PC-9 (cell line): ENCODE measurements at regions of chr7 and their contacts with region 1.

Region 1: DNA sequence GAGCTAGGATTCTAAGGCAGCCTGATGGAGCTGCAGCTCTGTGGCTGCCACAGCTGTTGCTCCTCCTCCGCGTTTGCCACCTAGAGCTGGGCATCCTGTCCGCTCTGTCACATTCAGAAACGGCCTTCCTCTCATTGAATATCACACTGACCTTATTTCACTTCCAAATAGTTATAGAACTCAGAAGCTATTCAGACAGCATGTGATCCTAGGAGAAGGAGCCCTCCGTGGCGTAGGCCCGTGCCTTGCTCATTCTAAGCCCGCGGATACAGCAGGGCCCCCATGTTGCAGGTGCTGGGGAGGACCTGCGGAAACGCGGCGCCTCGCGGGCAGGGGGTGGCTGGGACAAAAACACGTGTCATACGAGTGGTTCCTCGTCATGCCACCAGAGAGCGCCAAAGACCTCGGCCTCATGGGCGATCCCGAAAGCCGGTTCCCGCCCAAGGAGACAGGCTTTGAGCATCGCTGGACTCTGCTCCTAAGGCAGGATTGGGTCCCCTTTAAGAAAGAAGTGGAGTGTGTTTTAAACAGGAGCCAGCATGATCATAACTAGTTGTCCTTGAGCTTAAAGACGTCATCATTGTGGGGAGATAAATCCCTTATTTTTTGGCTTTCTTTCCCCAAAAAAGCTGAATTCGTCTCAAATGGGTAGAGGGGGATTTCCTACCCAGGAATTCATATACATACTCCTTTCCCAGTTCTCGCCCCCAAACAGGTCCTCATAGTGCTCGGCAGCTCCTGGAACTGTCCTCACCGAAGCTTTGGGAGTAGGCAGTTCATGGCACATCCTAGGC is 17.9 kb upstream of the FIGNL1 start:
- DNase-seq: peak; percentile 55 to 86
- H3K4me3 ChIP-seq: peak overlapping the region; percentile 38; the same call in 1 of the 2 replicates
- H3K27ac ChIP-seq: no peak overlapping the region
- H3K4me1 ChIP-seq: peaks cover 4% of the 10 kb centered on the region
- H3K27me3 ChIP-seq: no peaks in the 10 kb centered on the region
- CTCF ChIP-seq: peak; percentile 99

Region 2: GRCh38 chr7:50418086-50418515 is 49.9 kb before region 1 on chr7:
- CTCF ChIA-PET with region 1: no interaction called
- POLR2A ChIA-PET with region 1: no interaction called
- intact Hi-C with region 1: no loop called
- DNase-seq: peak; percentile 63 to 71
- H3K4me3 ChIP-seq: no peak overlapping the region
- H3K27ac ChIP-seq: no peak overlapping the region
- H3K4me1 ChIP-seq: no peaks in the 10 kb centered on the region
- H3K27me3 ChIP-seq: peaks cover 17% of the 10 kb centered on the region; the same call in 1 of the 2 replicates
- CTCF ChIP-seq: peak; percentile 94

Region 3: DNA sequence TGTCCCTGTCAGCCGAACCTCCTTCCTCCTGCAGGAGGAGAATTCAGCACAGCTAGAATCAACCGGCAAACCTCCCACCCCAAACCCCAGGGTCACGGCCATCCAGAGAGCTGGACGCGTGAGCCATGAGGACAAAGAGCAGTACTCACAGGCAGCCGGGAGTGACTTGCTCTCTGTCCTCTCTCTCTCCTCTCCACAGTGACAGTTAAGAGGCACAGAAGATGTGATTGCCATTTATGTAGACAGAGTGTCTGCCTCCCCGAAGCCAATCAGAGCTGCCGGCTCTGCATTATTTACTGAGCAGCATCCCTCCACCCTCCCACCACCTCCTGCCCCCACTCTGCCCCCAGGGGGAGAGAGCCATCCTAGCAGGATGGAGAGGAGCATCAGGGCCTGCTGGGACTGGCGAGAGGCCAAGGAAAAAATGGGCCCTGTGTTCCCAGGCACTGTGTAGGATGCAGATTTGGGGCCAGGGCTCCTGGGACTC is 92.9 kb after region 1 on chr7:
- CTCF ChIA-PET with region 1: no interaction called
- POLR2A ChIA-PET with region 1: no interaction called
- intact Hi-C with region 1: loop called (anchors 5 kb)
- DNase-seq: no peak
- H3K4me3 ChIP-seq: no peak overlapping the region
- H3K27ac ChIP-seq: no peak overlapping the region
- H3K4me1 ChIP-seq: peaks cover 8% of the 10 kb centered on the region
- H3K27me3 ChIP-seq: peaks cover 33% of the 10 kb centered on the region; the same call in 1 of the 2 replicates
- CTCF ChIP-seq: no peak

Region 4: DNA sequence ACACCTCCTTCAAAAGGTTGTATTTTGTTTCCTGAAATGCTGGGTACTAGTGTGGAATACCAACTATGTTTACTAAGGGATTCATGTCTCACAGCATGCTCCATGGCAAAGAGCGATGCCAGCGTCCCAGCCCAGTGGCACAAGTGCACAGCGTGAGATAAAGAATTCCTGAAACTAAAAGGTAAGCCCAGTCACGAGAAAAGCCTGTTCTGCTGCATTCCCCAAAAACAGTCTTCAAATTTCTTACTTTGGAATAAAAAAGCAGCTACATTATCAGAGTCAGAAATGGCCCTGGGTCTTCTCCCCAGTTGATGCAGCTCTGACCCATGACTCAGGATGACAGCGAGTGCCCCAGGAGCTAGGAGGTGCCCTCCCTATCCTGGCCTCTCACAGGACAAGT is 150.3 kb after region 1 on chr7:
- CTCF ChIA-PET with region 1: no interaction called
- POLR2A ChIA-PET with region 1: no interaction called
- intact Hi-C with region 1: loop called (anchors 2 kb)
- DNase-seq: peak; percentile 56 to 59
- H3K4me3 ChIP-seq: no peak overlapping the region
- H3K27ac ChIP-seq: no peak overlapping the region
- H3K4me1 ChIP-seq: peaks cover 12% of the 10 kb centered on the region; the same call in 1 of the 2 replicates
- H3K27me3 ChIP-seq: no peaks in the 10 kb centered on the region
- CTCF ChIP-seq: no peak

Region 5: DNA sequence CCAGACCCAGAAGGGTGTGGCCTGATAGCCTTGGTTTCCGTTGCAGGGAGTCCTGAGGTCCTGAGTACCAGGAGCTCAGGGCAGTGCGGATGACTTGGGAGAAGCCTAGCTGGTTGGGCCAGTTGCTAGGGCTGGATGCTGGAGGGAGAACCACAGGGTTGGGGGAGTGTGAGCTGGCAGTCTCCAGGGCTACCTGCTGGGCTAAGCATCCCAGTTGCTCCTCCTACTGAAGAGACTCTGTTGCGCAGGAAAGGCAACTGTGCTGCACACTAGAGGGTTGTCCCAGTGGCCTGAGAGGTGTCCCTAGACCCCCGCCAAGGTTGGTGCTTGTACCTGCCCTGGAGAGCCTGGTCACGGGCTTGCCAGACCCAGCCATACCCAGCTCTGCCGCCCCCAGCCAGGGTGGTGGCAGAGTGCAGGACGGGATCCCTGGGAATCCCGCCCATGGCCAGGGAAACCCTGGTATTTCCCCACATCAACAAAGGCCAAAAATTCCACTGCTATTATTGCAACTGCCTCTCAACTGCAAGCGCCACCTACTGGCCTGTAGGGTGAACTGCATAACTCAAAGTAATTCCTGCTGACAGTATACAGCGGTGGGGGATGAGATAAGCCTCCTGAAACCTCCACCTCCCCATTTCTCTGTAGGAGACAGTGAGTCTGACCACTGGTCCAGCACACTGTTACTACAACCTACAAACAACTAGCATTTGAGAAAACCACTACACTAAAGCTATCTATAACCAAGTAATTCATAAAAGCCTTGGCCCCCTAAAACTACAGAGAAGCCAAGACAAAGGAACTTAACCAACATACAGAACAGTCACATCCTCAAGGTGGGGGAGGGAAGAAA is 164.8 kb after region 1 on chr7:
- CTCF ChIA-PET with region 1: interaction called, 5 read pairs
- POLR2A ChIA-PET with region 1: no interaction called
- intact Hi-C with region 1: loop called (anchors 1 kb)
- DNase-seq: peak in 1 of 2 experiments; percentile 48
- H3K4me3 ChIP-seq: no peak overlapping the region
- H3K27ac ChIP-seq: no peak overlapping the region
- H3K4me1 ChIP-seq: no peaks in the 10 kb centered on the region
- H3K27me3 ChIP-seq: no peaks in the 10 kb centered on the region
- CTCF ChIP-seq: peak; percentile 99

Region 6: DNA sequence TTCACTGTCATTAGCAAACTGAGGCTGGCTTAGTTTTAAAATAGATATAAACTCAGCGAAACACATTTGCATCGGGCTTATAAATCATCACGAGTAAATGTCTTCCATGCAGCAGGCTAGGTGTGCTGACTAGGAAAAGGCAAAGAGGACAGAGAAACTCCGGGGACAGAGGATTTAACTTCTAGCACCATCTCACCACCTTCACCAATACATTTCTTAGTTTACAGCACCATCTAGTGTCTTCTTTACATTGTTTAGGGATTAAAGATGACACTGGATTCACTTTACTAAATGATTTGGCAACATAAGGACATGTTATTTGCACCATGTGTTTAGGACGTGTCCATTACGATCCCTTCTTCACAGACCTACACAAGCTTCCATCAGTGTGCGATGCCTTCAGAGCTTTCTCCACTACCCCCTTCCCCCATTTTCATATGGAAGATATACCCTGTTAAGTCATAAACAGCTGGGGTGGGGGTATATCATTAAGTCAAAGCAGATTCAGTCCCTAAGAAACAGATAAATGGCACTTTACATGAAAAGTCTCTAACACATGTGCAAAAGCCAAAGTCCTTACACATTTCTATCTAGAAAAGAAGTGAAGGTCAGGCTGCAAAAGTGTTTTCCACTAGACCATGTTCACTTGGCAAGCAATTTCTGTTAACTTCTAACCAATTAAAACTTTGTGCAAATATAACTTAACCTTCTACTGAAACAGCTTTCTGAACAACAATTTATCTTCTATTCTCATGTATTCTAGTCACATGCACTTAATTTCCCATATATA is 211.4 kb after region 1 on chr7:
- CTCF ChIA-PET with region 1: no interaction called
- POLR2A ChIA-PET with region 1: no interaction called
- intact Hi-C with region 1: loop called (anchors 1 kb)
- DNase-seq: peak in 1 of 2 experiments; percentile 59
- H3K4me3 ChIP-seq: no peak overlapping the region
- H3K27ac ChIP-seq: no peak overlapping the region
- H3K4me1 ChIP-seq: peaks cover 10% of the 10 kb centered on the region
- H3K27me3 ChIP-seq: no peaks in the 10 kb centered on the region
- CTCF ChIP-seq: peak; percentile 74

Region 7: DNA sequence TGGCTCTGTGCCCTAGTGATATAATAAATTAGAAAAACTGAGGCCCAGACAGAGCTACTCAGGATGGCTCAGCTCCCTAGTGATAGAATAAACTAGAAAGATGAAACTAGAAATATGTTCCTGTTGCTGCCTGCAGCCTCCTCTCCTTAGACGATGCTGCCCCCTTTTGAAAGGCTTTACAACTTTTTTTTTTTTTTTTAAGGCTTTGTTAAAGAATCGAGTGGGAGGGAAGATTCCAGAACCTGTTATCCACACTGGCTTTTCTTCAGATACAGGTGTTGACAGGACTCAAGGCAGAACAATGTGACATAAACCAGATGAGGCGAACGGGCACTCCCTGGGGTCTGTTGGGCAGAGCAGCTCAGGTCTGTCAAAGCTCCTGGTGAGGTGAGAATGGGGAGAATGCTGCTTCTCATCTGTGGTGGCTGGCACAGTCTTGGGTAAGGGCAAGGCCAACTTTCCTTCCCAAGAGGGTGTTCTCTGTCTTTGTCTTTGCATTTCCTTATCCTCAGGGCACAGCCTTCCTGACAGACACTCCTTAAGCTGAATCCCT is 673.5 kb after region 1 on chr7:
- CTCF ChIA-PET with region 1: no interaction called
- POLR2A ChIA-PET with region 1: no interaction called
- intact Hi-C with region 1: loop called (anchors 1 kb)
- DNase-seq: peak in 1 of 2 experiments; percentile 17
- H3K4me3 ChIP-seq: no peak overlapping the region
- H3K27ac ChIP-seq: no peak overlapping the region
- H3K4me1 ChIP-seq: peaks cover 11% of the 10 kb centered on the region
- H3K27me3 ChIP-seq: no peaks in the 10 kb centered on the region
- CTCF ChIP-seq: peak; percentile 89

Region 8: GRCh38 chr7:51366930-51367613 is 899.1 kb after region 1 on chr7:
- CTCF ChIA-PET with region 1: no interaction called
- POLR2A ChIA-PET with region 1: no interaction called
- intact Hi-C with region 1: loop called (anchors 10 kb)
- DNase-seq: peak; percentile 54 to 61
- H3K4me3 ChIP-seq: no peak overlapping the region
- H3K27ac ChIP-seq: no peak overlapping the region
- H3K4me1 ChIP-seq: peaks cover 7% of the 10 kb centered on the region
- H3K27me3 ChIP-seq: no peaks in the 10 kb centered on the region
- CTCF ChIP-seq: peak; percentile 96